ENCODE measurements at regions of chr5 and their contacts with region 1.

Region 1: GRCh38 chr5:90434116-90434714 is 24.7 kb upstream of the CETN3 start:
- DNase-seq: peak; percentile 57
- H3K4me3 Mint-ChIP-seq: no peak overlapping the region
- H3K27ac Mint-ChIP-seq: no peak overlapping the region
- H3K4me1 Mint-ChIP-seq: no peaks in the 10 kb centered on the region
- H3K27me3 Mint-ChIP-seq: no peaks in the 10 kb centered on the region

Region 2: DNA sequence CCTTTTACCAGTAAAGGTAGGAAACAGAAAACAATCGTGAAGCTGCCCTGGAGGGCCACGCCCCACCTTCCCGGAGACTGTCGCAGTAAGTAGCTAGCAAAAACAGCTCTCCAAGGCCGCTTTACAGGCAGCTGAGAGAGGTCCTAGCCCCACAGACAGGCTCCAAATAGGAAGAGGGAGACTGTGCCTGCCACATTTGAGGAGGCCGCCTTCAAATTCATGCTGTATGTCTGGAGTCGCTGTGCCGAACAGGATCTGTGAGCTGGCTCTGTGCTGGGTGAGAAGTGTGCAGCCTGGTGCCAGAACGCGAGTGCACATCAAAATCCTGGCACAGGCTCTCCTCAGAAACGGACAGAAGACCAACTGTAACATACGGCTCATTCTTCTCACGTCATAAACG is 606.9 kb before region 1 on chr5:
- CTCF ChIA-PET with region 1: no interaction called
- POLR2A ChIA-PET with region 1: no interaction called
- intact Hi-C with region 1: no loop called
- DNase-seq: no peak
- H3K4me3 Mint-ChIP-seq: no peak overlapping the region
- H3K27ac Mint-ChIP-seq: no peak overlapping the region
- H3K4me1 Mint-ChIP-seq: no peaks in the 10 kb centered on the region
- H3K27me3 Mint-ChIP-seq: no peaks in the 10 kb centered on the region

Region 3: DNA sequence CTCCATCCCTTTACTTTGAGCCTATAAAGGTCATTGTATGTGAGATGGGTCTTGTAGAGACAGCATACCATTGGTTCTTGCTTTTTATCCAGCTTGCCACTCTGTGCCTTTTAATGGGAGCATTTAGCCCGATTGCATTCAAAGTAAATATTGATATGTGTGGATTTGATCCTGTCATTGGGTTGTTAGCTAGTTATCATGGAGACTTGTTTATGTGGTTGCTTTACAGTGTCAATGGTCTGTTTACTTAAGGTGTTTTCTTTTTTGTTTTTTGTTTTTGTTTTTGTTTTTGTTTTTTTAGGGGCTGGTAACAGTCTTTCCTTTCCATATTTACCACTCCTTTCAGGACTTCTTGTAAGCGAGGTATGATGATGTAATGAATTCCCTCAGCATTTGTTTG is 110.1 kb before region 1 on chr5:
- CTCF ChIA-PET with region 1: no interaction called
- POLR2A ChIA-PET with region 1: no interaction called
- intact Hi-C with region 1: no loop called
- DNase-seq: no peak
- H3K4me3 Mint-ChIP-seq: no peak overlapping the region
- H3K27ac Mint-ChIP-seq: no peak overlapping the region
- H3K4me1 Mint-ChIP-seq: no peaks in the 10 kb centered on the region
- H3K27me3 Mint-ChIP-seq: peaks cover 3% of the 10 kb centered on the region

Region 4: DNA sequence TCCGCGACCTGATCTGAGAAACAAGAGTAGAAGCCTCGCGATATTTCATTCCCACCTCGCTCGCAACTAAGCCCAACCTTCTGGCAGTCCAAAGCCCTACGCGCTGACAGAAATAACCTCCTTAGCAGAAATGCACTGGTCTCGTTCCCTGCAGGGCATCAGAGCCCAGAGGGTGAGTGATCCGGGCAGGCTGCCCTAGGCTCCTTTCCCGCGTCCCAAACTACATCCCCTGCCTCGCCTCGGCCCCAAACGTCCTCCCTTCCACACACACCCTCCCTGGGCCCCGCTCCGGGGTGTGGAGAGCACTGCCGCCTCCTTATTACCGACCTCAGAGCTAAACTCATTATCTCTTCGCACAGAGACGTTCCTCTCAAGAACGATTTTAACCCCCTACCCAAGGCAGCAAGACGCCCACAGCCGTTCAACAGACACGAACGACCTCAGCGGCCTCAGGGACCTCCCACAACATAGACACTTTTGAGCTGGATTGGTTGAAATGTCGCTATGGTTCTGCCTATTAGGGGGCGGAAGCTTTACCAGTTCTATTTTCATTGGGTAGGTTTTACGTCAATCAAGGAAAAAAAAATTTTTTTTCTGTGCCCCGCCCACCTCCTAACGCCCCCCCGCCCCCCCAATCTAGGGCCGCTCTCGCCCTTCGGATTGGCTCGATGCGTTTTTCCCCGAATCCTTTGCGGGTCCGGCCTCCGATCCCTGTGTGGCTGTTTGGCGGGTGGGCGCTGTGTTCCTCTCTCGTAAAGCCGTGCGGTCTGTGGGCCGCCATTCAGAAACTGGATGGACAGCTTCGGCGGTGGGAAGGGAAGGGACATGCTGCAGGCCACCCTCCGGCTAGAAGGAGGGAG is 24.7 kb before region 1 on chr5 and contains the start of gene CETN3:
- CTCF ChIA-PET with region 1: interaction called, 11 read pairs
- POLR2A ChIA-PET with region 1: interaction called, 3 read pairs
- intact Hi-C with region 1: loop called (anchors 2 kb)
- DNase-seq: peak; percentile 94
- H3K4me3 Mint-ChIP-seq: no peak within 1 kb of the TSS
- H3K27ac Mint-ChIP-seq: no peak within 1 kb of the TSS
- H3K4me1 Mint-ChIP-seq: peaks cover 16% of the 10 kb centered on the region
- H3K27me3 Mint-ChIP-seq: no peaks in the 10 kb centered on the region
- total RNA-seq, gene CETN3: 49.8 to 51.8 TPM

Region 5: GRCh38 chr5:90529194-90529938 is 95.2 kb after region 1 on chr5 and contains the start of gene LYSMD3:
- CTCF ChIA-PET with region 1: interaction called, 47 read pairs
- POLR2A ChIA-PET with region 1: no interaction called
- intact Hi-C with region 1: loop called (anchors 1 kb)
- DNase-seq: peak; percentile 97
- H3K4me3 Mint-ChIP-seq: peak within 1 kb of the TSS; percentile 100
- H3K27ac Mint-ChIP-seq: peak within 1 kb of the TSS; percentile 96
- H3K4me1 Mint-ChIP-seq: peaks cover 24% of the 10 kb centered on the region
- H3K27me3 Mint-ChIP-seq: peaks cover 10% of the 10 kb centered on the region
- total RNA-seq, gene LYSMD3: 12.6 to 13.0 TPM

Region 6: GRCh38 chr5:90606539-90606938 is 172.3 kb after region 1 on chr5:
- CTCF ChIA-PET with region 1: interaction called, 3 read pairs
- POLR2A ChIA-PET with region 1: no interaction called
- intact Hi-C with region 1: loop called (anchors 5 kb)
- DNase-seq: no peak
- H3K4me3 Mint-ChIP-seq: no peak overlapping the region
- H3K27ac Mint-ChIP-seq: no peak overlapping the region
- H3K4me1 Mint-ChIP-seq: no peaks in the 10 kb centered on the region
- H3K27me3 Mint-ChIP-seq: peaks cover 15% of the 10 kb centered on the region

Region 7: DNA sequence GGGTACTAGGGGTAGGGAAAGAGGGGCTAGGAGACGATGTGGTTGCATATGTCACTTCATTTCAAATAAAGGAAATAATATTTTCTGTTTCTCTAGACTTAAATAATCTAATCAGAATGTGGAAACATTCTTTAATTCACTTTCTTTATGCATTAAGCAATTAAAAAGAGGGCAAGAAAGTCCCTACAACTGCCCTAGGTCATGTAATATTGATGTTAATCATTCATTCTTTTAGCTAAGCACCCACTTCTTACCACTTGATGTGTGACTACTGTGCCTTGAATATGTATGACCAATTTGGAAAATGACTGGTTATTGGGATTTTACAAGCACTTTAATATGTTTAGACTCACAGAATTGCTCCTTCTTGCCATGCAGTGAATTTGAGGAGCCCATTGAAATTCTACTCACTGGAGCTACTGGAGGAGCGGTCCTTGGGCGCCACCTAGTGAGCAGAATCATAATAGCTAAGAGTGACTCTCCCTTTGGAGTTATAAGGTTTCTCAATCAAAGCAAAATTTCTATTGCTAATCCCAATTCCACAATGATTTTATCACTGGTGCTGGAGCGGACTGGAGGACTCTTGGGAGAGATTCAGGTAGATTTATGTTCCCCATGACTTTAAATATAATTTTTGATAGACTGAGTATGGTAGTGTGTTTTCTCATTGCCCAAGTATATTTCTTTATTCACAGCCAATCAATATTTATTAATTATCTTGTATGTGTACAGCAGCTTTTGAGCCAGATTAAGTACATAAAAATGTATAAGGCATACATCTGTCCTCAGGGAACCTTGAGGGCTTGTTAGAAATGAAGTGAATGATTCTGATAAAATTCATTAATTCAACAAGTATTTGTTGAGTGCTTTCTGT is 349.5 kb after region 1 on chr5:
- CTCF ChIA-PET with region 1: interaction called, 38 read pairs
- POLR2A ChIA-PET with region 1: no interaction called
- intact Hi-C with region 1: no loop called
- DNase-seq: peak; percentile 70
- H3K4me3 Mint-ChIP-seq: no peak overlapping the region
- H3K27ac Mint-ChIP-seq: no peak overlapping the region
- H3K4me1 Mint-ChIP-seq: no peaks in the 10 kb centered on the region
- H3K27me3 Mint-ChIP-seq: peaks cover 4% of the 10 kb centered on the region